ENCODE measurements at regions of chr16 and their contacts with region 1.

Region 1: DNA sequence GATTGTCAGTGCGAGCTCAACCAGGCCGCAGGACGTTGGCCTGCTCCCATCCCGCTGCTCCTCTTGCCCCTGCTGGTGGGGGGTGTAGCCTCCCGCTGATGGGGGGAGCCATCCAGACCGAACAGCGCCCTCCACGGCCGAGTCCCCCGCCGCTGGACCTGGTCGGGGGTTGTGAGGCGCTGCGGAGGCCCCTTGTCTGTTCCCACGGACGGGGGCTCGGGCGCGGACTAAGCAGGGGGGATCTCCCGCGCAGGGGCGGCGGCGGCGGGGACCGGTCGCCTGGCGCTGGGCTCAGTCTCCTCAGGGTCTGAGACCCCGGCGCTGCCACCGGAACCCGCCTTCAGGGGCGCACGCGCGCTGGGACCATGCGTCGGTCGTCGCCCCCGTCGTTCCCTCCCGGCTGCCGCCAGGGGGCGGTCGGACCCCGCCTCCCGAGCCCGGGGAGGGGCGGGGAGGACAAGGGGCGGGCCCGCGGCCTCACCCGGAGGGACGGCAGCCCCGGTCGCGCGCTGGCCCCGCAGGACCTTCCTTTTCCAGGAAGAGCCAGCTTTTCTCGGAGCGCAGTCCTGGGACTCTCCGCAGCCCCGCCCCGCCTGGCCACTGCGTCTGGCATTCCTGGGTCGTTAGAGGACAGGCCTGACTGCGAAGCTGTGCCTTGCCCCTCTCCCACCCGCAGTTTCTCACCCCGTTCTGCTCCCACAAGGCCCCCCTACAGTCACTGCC is 6.3 kb upstream of the IL32 start:
- DNase-seq: peak; percentile 92
- H3K4me3 ChIP-seq: peak overlapping the region; percentile 89
- H3K27ac ChIP-seq: peak overlapping the region; percentile 81
- H3K4me1 ChIP-seq: peaks cover 12% of the 10 kb centered on the region
- H3K27me3 ChIP-seq: no peaks in the 10 kb centered on the region
- CTCF ChIP-seq: peak; percentile 95

Region 2: DNA sequence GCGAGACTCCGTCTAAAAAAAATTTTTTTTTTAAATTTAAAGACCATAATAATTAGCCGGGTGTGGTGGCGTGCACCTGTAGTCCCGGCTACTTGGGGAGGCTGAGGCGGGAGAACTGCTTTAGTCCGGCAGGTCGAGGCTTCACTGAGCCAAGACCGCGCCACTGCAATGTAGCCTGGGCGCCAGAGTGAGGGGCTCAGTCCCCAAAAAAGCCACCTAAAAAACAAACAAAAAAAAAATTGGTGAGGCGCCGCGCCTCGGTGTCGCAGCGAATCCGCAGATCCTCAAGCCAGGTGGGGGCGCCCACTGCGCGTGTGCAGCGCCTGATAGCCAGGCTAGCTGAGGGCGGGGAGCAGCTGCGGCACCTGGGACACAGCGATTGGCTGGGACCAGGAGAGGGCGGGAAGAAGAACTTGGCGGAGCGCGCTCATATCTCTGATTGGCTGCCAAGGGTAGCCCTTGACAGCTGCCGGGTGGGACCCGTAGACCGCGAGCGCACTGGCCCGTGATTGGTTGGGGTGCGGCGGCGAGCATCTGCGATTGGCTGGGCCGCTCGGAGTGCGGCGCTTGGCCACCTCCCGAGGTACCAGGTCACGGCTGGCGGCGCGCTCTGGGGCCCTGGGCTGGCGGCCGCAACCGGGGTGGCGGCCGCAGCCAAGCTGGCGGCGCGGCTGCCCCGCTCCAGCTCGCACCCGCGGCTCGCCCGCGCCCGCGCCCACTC is 55.4 kb before region 1 on chr16:
- intact Hi-C with region 1: no loop called
- DNase-seq: peak; percentile 97
- H3K4me3 ChIP-seq: no peak overlapping the region
- H3K27ac ChIP-seq: no peak overlapping the region
- H3K4me1 ChIP-seq: peaks cover 16% of the 10 kb centered on the region
- H3K27me3 ChIP-seq: no peaks in the 10 kb centered on the region
- CTCF ChIP-seq: peak; percentile 54

Region 3: GRCh38 chr16:3165111-3165822 is 106.1 kb after region 1 on chr16:
- intact Hi-C with region 1: loop called (anchors 5 kb)
- DNase-seq: no peak
- H3K4me3 ChIP-seq: no peak overlapping the region
- H3K27ac ChIP-seq: no peak overlapping the region
- H3K4me1 ChIP-seq: peaks cover 1% of the 10 kb centered on the region
- H3K27me3 ChIP-seq: peaks cover 22% of the 10 kb centered on the region
- CTCF ChIP-seq: no peak

Region 4: DNA sequence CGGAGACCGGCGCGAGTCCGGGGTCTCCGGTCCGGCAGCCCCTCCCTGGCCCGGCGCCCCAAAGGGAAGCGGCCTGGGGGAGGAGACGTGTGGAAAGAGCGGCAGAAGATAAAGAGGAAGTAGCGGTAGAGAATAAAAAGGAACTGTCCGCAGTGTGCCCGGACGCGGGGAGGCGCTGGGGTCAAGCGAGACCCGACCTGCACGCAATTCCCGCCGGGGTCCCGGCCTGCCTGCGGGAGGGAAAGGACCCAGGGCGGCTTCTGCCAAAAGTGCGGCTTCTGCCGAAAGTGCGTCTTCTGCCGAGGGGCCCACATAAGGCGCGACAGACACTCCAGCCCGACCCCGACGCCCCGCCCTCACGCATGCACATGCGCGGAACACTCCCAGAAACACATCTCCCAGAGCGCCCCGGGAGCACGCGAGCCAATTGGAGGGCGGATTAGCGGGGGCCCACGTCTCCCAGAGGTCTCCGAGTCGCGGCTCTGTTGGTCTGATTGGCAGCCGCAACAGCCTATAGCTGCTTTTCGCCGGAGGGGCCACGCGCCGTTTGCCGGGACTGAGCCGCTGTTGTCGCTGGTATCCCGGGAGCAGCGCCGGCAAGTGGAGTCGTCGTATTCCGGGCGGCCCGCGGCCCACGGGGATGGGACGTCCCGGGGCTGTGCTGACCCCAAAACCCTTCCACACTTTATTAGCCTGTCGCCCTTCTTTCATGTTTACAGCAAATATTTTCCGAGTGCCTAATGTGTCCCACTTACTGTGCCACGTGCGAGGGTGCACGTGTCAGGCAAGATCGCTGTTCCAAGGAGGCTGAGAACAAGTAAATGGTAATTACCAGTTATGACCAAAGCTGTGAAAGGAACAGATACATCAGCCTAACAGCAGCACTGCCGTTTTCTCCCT is 205.2 kb after region 1 on chr16:
- intact Hi-C with region 1: no loop called
- DNase-seq: peak; percentile 98
- H3K4me3 ChIP-seq: peak overlapping the region; percentile 65
- H3K27ac ChIP-seq: peak overlapping the region; percentile 98
- H3K4me1 ChIP-seq: peaks cover 3% of the 10 kb centered on the region
- H3K27me3 ChIP-seq: no peaks in the 10 kb centered on the region
- CTCF ChIP-seq: no peak

Measured in colonic mucosa (tissue), 4 donors.